ENCODE measurements at regions of chr19 and their contacts with region 1.

Region 1: DNA sequence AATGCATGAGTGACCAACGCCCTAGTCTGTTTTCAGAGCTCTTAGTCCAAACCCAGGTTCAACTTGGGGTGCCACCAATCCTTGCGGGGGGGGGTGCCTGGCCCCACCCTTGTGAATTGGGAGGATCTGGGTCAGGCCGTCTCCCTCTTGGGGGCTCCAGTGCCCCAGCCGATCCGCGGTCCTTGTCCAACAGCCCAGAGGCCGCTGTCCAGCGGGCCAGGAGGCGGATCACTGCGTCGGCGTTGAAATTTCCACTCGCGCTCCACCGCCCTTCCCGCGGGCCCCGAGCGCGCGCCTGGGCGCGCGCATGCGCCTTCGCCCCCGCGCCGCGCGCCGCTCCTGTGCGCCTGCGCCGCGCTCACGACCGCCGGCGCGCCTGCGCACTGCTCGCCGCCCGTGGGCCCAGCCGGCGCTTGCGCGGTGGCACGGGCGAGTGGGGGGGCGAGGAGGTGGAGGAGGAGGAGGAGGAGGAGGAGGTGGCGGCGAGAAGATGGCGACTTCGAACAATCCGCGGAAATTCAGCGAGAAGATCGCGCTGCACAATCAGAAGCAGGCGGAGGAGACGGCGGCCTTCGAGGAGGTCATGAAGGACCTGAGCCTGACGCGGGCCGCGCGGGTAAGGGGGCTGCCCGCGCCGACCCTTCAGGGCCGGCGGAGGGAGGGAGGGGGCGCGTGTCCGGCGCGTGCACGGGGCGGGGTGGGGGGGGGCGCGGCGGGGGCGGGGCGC is at the start of gene CRTC1:
- DNase-seq: no peak
- H3K4me3 ChIP-seq: peak within 1 kb of the TSS; percentile 50 to 64
- H3K27ac ChIP-seq: peak within 1 kb of the TSS; percentile 84
- H3K4me1 ChIP-seq: peaks cover 23% of the 10 kb centered on the region
- H3K27me3 ChIP-seq: no peaks in the 10 kb centered on the region
- CTCF ChIP-seq: no peak
- POLR2A ChIP-seq: peak in 1 of 2 donors; percentile 61
- total RNA-seq, gene CRTC1: 7.4 TPM

Region 2: DNA sequence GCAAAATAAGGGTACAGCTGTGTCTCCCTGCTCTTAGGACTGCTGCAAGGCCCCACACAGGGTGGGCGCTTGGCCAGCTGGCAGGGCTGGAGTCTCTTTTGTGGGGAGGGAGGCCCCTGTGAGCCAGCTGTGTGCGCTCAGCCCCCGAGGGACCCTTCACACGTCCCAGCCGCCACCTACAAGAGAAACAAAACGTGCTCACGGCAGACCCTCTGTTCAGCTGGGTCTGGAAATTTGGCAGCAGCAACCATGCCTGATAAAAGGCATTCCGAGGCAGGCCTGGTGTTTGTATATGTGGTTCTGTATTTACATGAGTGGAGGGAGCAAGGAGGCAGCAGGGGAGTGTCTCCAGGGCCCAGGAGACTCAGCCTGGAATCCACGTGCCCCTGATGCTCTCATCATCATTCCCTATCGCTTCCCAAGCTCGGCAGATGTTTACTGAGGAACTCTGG is 49.8 kb after region 1 on chr19:
- intact Hi-C with region 1: no loop called
- DNase-seq: no peak
- H3K4me3 ChIP-seq: no peak overlapping the region
- H3K27ac ChIP-seq: peak overlapping the region; percentile 36
- H3K4me1 ChIP-seq: peaks cover 10% of the 10 kb centered on the region
- H3K27me3 ChIP-seq: no peaks in the 10 kb centered on the region
- CTCF ChIP-seq: no peak
- POLR2A ChIP-seq: no peak

Region 3: GRCh38 chr19:18814063-18814462 is 130.7 kb after region 1 on chr19:
- intact Hi-C with region 1: no loop called
- DNase-seq: no peak
- H3K4me3 ChIP-seq: no peak overlapping the region
- H3K27ac ChIP-seq: no peak overlapping the region
- H3K4me1 ChIP-seq: peaks cover 13% of the 10 kb centered on the region
- H3K27me3 ChIP-seq: no peaks in the 10 kb centered on the region
- CTCF ChIP-seq: no peak
- POLR2A ChIP-seq: no peak

Region 4: DNA sequence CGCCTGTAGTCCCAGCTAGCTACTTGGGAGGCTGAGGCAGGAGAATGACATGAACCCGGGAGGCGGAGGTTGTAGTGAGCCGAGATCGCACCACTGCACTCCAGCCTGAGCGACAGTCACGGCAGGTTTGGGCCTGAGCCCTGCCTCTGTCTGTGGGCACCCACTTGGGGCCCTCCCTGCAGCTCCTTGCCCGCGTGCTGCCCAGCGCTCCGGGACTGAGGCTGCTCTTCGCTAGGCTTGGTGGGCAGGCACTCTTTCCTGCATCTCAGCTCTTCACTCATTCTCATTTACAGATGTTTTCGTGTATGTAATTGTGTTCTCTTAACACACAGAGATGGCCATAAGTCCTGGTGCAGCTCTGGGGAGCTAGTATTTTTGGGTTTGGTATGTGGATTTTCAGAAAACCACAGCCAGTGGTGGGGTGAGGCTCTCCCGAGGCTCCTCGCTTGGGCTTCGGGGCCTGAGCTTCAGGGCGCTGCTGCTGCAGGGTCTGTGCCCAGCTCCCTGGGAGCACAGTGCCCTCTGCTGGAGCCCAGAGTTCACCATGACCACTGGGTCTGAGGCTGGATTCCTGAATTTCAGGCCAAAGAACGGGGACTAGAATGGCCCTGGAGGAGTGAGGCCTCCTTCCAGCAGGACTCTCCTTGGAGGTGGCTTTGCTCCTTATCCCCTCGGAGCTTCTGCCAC is 163.6 kb after region 1 on chr19:
- intact Hi-C with region 1: loop called (anchors 10 kb)
- DNase-seq: no peak
- H3K4me3 ChIP-seq: no peak overlapping the region
- H3K27ac ChIP-seq: peak overlapping the region; percentile 92
- H3K4me1 ChIP-seq: peaks cover 90% of the 10 kb centered on the region
- H3K27me3 ChIP-seq: no peaks in the 10 kb centered on the region
- CTCF ChIP-seq: peak; percentile 43 to 76 (median 58)
- POLR2A ChIP-seq: no peak